ENCODE measurements at regions of chr6 and their contacts with region 1.

Region 1: GRCh38 chr6:149545754-149546528 is at the start of gene PPIL4:
- DNase-seq: peak; percentile 96
- H3K4me3 Mint-ChIP-seq: peak within 1 kb of the TSS; percentile 98
- H3K27ac Mint-ChIP-seq: peak within 1 kb of the TSS; percentile 99
- H3K4me1 Mint-ChIP-seq: peaks cover 41% of the 10 kb centered on the region
- H3K27me3 Mint-ChIP-seq: peaks cover 4% of the 10 kb centered on the region
- total RNA-seq, gene PPIL4: 17.6 to 20.1 TPM

Region 2: GRCh38 chr6:149565527-149566409 is 19.8 kb after region 1 on chr6 and contains the start of gene GINM1:
- CTCF ChIA-PET with region 1: interaction called, 29 read pairs
- POLR2A ChIA-PET with region 1: no interaction called
- DNase-seq: peak; percentile 95
- H3K4me3 Mint-ChIP-seq: peak within 1 kb of the TSS; percentile 94
- H3K27ac Mint-ChIP-seq: peak within 1 kb of the TSS; percentile 96
- H3K4me1 Mint-ChIP-seq: peaks cover 23% of the 10 kb centered on the region
- H3K27me3 Mint-ChIP-seq: peaks cover 3% of the 10 kb centered on the region
- total RNA-seq, gene GINM1: 18.7 to 21.1 TPM